CD8-positive, alpha-beta T cell (primary cell): ENCODE measurements at regions of chr6 and their contacts with region 1.

Region 1: GRCh38 chr6:144215932-144216667 is 65.8 kb downstream of the STX11 start:
- DNase-seq: peak; percentile 85 to 97 (median 92)
- ATAC-seq: peak; percentile 85
- H3K4me3 ChIP-seq: peak overlapping the region; percentile 70 to 71
- H3K4me3 Mint-ChIP-seq: peak overlapping the region; percentile 95
- H3K27ac ChIP-seq: peak overlapping the region; percentile 82 to 86
- H3K27ac Mint-ChIP-seq: peak overlapping the region; percentile 100
- H3K4me1 ChIP-seq: peaks cover 27% of the 10 kb centered on the region
- H3K4me1 Mint-ChIP-seq: peaks cover 36% of the 10 kb centered on the region
- H3K27me3 ChIP-seq: no peaks in the 10 kb centered on the region
- H3K27me3 Mint-ChIP-seq: peaks cover 2% of the 10 kb centered on the region
- CTCF ChIP-seq: peak; percentile 64

Region 2: DNA sequence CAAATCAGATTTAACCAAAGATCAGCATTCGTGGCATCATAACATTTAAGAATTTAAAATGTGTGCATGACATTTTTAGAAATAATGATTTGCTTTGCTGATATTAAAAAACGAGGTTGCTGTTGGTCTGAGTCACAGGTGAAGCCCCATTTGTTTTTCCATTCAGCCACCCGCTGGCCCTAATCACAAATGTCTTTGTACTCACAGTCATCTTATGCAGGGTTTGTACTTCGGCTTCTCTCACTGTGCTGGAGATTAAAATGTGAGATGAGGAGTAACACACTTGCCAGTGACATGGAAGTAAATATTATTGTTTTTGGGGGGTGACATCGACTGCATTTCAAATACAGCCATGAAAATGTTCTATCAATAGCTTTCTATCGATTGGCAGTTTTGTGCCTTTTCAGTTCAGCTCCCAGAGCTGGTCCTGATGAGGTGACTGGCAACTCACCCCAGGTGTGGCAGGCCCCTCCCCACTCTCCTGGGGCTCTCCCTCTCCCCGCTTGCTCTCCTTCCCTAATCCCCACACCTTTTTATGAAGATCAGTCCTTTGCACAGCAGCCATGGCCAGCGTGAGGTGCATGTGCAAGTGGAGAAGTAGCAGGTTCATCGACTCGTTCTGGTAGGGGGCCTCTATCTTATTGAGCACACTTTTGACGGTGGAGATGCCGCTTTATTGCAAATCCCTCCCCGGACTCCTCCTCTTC is 645.8 kb before region 1 on chr6:
- CTCF ChIA-PET with region 1: no interaction called
- POLR2A ChIA-PET with region 1: no interaction called
- intact Hi-C with region 1: loop called in 1 of 2 experiments (anchors 5 kb)
- DNase-seq: no peak
- ATAC-seq: no peak
- H3K4me3 ChIP-seq: no peak overlapping the region
- H3K4me3 Mint-ChIP-seq: no peak overlapping the region
- H3K27ac ChIP-seq: no peak overlapping the region
- H3K27ac Mint-ChIP-seq: no peak overlapping the region
- H3K4me1 ChIP-seq: no peaks in the 10 kb centered on the region
- H3K4me1 Mint-ChIP-seq: peaks cover 16% of the 10 kb centered on the region
- H3K27me3 ChIP-seq: no peaks in the 10 kb centered on the region
- H3K27me3 Mint-ChIP-seq: no peaks in the 10 kb centered on the region
- CTCF ChIP-seq: no peak

Region 3: GRCh38 chr6:144055121-144055931 is 160.8 kb before region 1 on chr6:
- CTCF ChIA-PET with region 1: no interaction called
- POLR2A ChIA-PET with region 1: no interaction called
- intact Hi-C with region 1: loop called in 1 of 2 experiments (anchors 5 kb)
- DNase-seq: peak in 6 of 9 experiments; percentile 30 to 84 (median 60)
- ATAC-seq: peak; percentile 98
- H3K4me3 ChIP-seq: peak overlapping the region; percentile 32 to 38
- H3K4me3 Mint-ChIP-seq: peak overlapping the region; percentile 82
- H3K27ac ChIP-seq: peak overlapping the region; percentile 32 to 80
- H3K27ac Mint-ChIP-seq: peak overlapping the region; percentile 94
- H3K4me1 ChIP-seq: peaks cover 20% of the 10 kb centered on the region
- H3K4me1 Mint-ChIP-seq: peaks cover 31% of the 10 kb centered on the region
- H3K27me3 ChIP-seq: no peaks in the 10 kb centered on the region
- H3K27me3 Mint-ChIP-seq: no peaks in the 10 kb centered on the region
- CTCF ChIP-seq: no peak

Region 4: GRCh38 chr6:144075187-144075586 is 140.9 kb before region 1 on chr6:
- CTCF ChIA-PET with region 1: no interaction called
- POLR2A ChIA-PET with region 1: no interaction called
- intact Hi-C with region 1: no loop called
- DNase-seq: no peak
- ATAC-seq: no peak
- H3K4me3 ChIP-seq: no peak overlapping the region
- H3K4me3 Mint-ChIP-seq: no peak overlapping the region
- H3K27ac ChIP-seq: no peak overlapping the region
- H3K27ac Mint-ChIP-seq: no peak overlapping the region
- H3K4me1 ChIP-seq: no peaks in the 10 kb centered on the region
- H3K4me1 Mint-ChIP-seq: no peaks in the 10 kb centered on the region
- H3K27me3 ChIP-seq: no peaks in the 10 kb centered on the region
- H3K27me3 Mint-ChIP-seq: no peaks in the 10 kb centered on the region
- CTCF ChIP-seq: no peak

Region 5: GRCh38 chr6:144171406-144171805 is 44.7 kb before region 1 on chr6:
- CTCF ChIA-PET with region 1: no interaction called
- POLR2A ChIA-PET with region 1: no interaction called
- intact Hi-C with region 1: no loop called
- DNase-seq: no peak
- ATAC-seq: no peak
- H3K4me3 ChIP-seq: no peak overlapping the region
- H3K4me3 Mint-ChIP-seq: no peak overlapping the region
- H3K27ac ChIP-seq: no peak overlapping the region
- H3K27ac Mint-ChIP-seq: no peak overlapping the region
- H3K4me1 ChIP-seq: no peaks in the 10 kb centered on the region
- H3K4me1 Mint-ChIP-seq: no peaks in the 10 kb centered on the region
- H3K27me3 ChIP-seq: no peaks in the 10 kb centered on the region
- H3K27me3 Mint-ChIP-seq: no peaks in the 10 kb centered on the region
- CTCF ChIP-seq: no peak

Region 6: DNA sequence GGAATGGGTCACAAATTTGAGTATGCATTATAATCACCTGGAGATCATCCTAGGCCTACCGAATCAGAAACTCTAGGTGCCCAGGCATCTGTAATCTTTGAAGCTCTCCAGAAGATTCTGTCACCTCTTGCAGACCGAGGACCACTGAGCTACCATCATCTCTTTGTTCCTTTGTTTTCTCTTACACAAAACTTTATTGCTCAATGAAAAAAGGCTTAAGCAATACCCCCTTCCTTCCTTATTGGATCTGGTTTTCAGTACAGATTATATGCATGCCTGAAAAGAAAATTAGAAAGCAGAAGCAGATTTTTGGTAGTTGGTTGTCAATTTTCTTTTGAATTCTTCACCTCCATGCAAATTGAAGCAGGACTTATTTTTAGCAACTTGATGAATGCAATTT is 34.5 kb before region 1 on chr6:
- CTCF ChIA-PET with region 1: no interaction called
- POLR2A ChIA-PET with region 1: no interaction called
- intact Hi-C with region 1: no loop called
- DNase-seq: no peak
- ATAC-seq: no peak
- H3K4me3 ChIP-seq: no peak overlapping the region
- H3K4me3 Mint-ChIP-seq: no peak overlapping the region
- H3K27ac ChIP-seq: no peak overlapping the region
- H3K27ac Mint-ChIP-seq: no peak overlapping the region
- H3K4me1 ChIP-seq: no peaks in the 10 kb centered on the region
- H3K4me1 Mint-ChIP-seq: peaks cover 15% of the 10 kb centered on the region
- H3K27me3 ChIP-seq: no peaks in the 10 kb centered on the region
- H3K27me3 Mint-ChIP-seq: no peaks in the 10 kb centered on the region
- CTCF ChIP-seq: no peak

Region 7: GRCh38 chr6:144265390-144265789 is 49.3 kb after region 1 on chr6:
- CTCF ChIA-PET with region 1: no interaction called
- POLR2A ChIA-PET with region 1: no interaction called
- intact Hi-C with region 1: no loop called
- DNase-seq: no peak
- ATAC-seq: no peak
- H3K4me3 ChIP-seq: no peak overlapping the region
- H3K4me3 Mint-ChIP-seq: no peak overlapping the region
- H3K27ac ChIP-seq: no peak overlapping the region
- H3K27ac Mint-ChIP-seq: no peak overlapping the region
- H3K4me1 ChIP-seq: no peaks in the 10 kb centered on the region
- H3K4me1 Mint-ChIP-seq: no peaks in the 10 kb centered on the region
- H3K27me3 ChIP-seq: no peaks in the 10 kb centered on the region
- H3K27me3 Mint-ChIP-seq: no peaks in the 10 kb centered on the region
- CTCF ChIP-seq: no peak

Region 8: DNA sequence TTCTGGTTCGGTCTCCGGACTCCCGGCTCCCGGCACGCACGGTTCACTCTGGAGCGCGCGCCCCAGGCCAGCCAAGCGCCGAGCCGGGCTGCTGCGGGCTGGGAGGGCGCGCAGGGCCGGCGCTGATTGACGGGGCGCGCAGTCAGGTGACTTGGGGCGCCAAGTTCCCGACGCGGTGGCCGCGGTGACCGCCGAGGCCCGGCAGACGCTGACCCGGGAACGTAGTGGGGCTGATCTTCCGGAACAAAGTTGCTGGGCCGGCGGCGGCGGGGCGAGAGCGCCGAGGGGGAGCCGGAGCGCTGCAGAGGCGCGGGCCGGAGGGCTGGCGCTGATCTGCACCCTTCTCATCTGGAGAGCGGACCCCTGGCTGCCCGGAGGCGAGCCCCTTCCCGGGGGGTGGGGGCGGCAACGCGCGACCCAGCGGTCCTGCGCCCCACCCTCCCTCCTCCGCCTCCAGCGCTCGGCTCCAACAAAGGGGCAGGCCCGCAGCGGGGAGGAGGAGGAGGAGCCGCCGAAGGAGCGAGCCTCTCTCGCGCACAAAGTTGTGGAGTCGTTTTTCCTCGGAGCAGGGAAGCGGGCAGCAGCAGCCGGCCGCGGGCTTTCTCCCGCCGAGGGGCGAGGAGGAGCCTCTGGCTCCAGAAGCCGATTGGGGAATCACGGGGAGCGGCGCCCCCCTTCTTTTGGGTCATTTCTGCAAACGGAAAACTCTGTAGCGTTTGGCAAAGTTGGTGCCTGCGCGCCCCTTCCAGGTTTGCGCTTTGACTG is 68.9 kb after region 1 on chr6 and contains the start of gene UTRN:
- CTCF ChIA-PET with region 1: no interaction called
- POLR2A ChIA-PET with region 1: no interaction called
- intact Hi-C with region 1: loop called (anchors 5 kb)
- DNase-seq: peak in 7 of 9 experiments; percentile 19 to 64 (median 28)
- ATAC-seq: peak; percentile 47
- H3K4me3 ChIP-seq: peak within 1 kb of the TSS; percentile 85 to 89
- H3K4me3 Mint-ChIP-seq: peak within 1 kb of the TSS; percentile 91
- H3K27ac ChIP-seq: peak within 1 kb of the TSS in 1 of 2 experiments; percentile 29
- H3K27ac Mint-ChIP-seq: peak within 1 kb of the TSS; percentile 41
- H3K4me1 ChIP-seq: peaks cover 8% of the 10 kb centered on the region
- H3K4me1 Mint-ChIP-seq: peaks cover 18% of the 10 kb centered on the region
- H3K27me3 ChIP-seq: no peaks in the 10 kb centered on the region
- H3K27me3 Mint-ChIP-seq: peaks cover 6% of the 10 kb centered on the region
- CTCF ChIP-seq: no peak
- total RNA-seq, gene UTRN: 125 to 130 TPM

Region 9: DNA sequence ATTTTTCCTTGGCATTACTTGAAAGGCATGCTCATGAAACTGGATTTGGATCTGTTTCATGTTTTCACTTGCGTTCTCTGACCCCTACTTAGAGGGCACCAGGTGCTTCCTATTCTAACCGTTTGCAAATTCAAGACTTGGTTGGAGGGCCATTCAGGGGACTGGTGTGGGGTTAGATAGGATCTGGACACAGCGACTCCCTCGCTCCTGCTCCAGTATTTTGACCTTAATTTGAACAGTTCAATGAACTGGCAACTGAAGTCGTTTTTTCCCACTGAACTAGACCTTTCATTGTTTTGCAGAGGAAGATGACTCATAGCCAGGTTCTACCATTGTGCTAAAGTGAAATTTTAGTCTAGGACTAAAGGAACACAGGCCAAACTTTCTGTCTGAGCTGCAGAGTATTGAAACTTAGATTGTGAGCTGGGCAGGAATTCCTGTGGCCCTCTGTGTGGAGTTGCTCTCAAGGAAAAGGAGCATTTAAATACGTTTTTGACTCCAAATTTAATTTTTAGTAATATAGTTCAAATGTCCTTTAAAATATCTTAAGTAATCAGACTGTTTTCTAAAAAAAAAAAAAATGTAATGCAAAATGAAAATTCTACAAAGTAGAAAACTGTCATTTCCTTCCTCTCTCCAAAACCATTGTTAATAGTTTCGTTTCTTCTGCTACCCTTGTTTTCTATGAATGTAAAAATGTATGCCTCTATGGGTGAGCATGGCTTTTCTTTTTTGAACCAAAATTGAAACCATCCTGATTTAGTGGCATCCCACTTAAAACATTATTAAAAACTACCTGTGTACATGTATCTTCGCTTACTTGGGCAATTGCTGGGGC is 133.8 kb after region 1 on chr6:
- CTCF ChIA-PET with region 1: no interaction called
- POLR2A ChIA-PET with region 1: interaction called, 3 read pairs
- intact Hi-C with region 1: loop called in 1 of 2 experiments (anchors 10 kb)
- DNase-seq: peak in 2 of 9 experiments; percentile 52 to 67
- ATAC-seq: peak; percentile 53
- H3K4me3 ChIP-seq: peak overlapping the region; percentile 8 to 29
- H3K4me3 Mint-ChIP-seq: peak overlapping the region; percentile 74
- H3K27ac ChIP-seq: peak overlapping the region; percentile 40 to 88
- H3K27ac Mint-ChIP-seq: peak overlapping the region; percentile 93
- H3K4me1 ChIP-seq: peaks cover 81% of the 10 kb centered on the region
- H3K4me1 Mint-ChIP-seq: peaks cover 90% of the 10 kb centered on the region
- H3K27me3 ChIP-seq: no peaks in the 10 kb centered on the region
- H3K27me3 Mint-ChIP-seq: no peaks in the 10 kb centered on the region
- CTCF ChIP-seq: no peak

Region 10: GRCh38 chr6:145963216-145964068 is 1747.3 kb after region 1 on chr6:
- CTCF ChIA-PET with region 1: no interaction called
- POLR2A ChIA-PET with region 1: no interaction called
- intact Hi-C with region 1: loop called (anchors 2 to 10 kb)
- DNase-seq: peak in 8 of 9 experiments; percentile 19 to 63 (median 47)
- ATAC-seq: peak; percentile 22
- H3K4me3 ChIP-seq: peak overlapping the region; percentile 73 to 94
- H3K4me3 Mint-ChIP-seq: peak overlapping the region; percentile 98
- H3K27ac ChIP-seq: peak overlapping the region; percentile 79 to 82
- H3K27ac Mint-ChIP-seq: peak overlapping the region; percentile 99
- H3K4me1 ChIP-seq: peaks cover 28% of the 10 kb centered on the region
- H3K4me1 Mint-ChIP-seq: peaks cover 63% of the 10 kb centered on the region
- H3K27me3 ChIP-seq: no peaks in the 10 kb centered on the region
- H3K27me3 Mint-ChIP-seq: no peaks in the 10 kb centered on the region
- CTCF ChIP-seq: no peak